ENCODE measurements at regions of chr7 and their contacts with region 1.

Region 1: DNA sequence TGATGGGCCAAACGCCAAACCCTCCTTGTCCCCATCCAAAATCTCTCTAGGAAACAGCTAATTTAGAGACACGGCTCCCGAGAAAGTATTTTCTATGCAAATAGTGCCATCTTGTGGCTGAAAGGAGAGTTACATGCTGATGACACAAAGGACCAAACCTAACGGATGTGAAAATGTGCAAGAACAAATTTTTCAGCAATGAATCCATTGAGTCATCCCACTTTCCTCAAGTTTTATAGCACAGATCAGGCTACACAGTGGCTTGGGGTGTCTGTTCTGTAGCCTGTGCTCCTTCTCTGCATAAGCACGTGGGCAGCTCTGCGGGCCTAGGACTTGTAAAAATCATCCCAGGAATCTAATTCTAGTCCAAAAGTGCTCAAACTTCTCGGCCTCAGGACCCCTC is 154.8 kb upstream of the PRR15 start:
- DNase-seq: peak; percentile 44
- H3K4me3 Mint-ChIP-seq: no peak overlapping the region
- H3K27ac Mint-ChIP-seq: no peak overlapping the region
- H3K4me1 Mint-ChIP-seq: no peaks in the 10 kb centered on the region
- H3K27me3 Mint-ChIP-seq: no peaks in the 10 kb centered on the region

Region 2: DNA sequence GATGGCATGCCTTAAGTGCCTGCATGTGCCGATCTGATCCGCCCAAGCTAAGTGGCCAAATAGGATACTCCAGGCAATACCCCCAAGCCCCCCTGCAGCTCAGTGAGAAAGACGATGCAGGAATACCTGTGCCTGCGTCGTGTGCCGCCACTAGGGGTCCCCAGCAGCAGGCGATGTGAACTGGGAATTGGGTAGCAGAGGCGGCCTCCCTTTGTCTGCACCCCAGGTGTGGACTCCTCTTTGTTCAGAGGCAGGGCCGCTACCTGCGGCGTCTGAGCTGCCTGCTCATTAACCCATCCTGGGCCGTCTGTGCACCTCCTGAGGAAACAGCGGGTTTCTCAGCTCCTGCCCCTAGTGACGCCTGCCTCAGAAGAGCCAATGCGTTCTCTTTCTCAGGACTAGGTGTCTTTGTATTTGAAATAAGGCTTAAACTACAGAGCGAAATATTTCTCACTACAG is 219.1 kb before region 1 on chr7:
- CTCF ChIA-PET with region 1: interaction called, 23 read pairs
- POLR2A ChIA-PET with region 1: no interaction called
- DNase-seq: peak; percentile 52
- H3K4me3 Mint-ChIP-seq: no peak overlapping the region
- H3K27ac Mint-ChIP-seq: no peak overlapping the region
- H3K4me1 Mint-ChIP-seq: peaks cover 2% of the 10 kb centered on the region
- H3K27me3 Mint-ChIP-seq: peaks cover 39% of the 10 kb centered on the region